Right cardiac atrium (tissue), 5 donors: ENCODE measurements at regions of chr2 and their contacts with region 1.

Region 1: DNA sequence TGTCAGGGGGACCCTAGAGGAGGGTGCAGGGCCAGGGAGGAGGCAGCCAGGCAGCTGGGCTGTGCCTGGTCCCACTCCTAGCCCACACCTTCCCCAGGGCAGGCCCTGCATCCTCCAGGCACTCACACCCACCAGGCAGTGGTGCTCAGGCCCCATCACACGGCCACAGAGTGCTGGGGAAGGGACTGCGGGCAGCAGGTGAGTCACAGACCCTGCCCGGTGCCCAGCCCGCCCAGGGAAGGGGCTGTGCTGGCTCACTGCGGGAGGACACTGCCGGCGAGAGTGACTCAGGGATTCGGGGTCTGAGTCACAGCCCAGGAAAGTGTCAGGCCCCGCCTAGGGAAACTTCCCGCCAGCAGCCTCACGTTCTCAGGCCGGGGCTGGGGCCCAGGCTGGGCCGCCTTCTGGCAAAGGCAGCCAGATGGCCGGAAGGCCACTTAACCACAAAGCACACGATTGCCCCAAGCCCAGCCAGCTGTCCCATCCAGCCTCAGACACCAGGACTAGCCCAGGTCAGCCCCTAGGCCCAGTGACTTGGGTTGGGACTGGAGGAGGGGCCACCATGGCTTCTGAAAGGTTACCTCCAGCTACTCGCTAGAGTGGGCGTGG is 42.2 kb downstream of the BIN1 start:
- DNase-seq: peak; percentile 95 to 96 (median 95)
- ATAC-seq: peak; percentile 92
- H3K4me3 ChIP-seq: no peak overlapping the region
- H3K27ac ChIP-seq: peak overlapping the region; percentile 7
- H3K4me1 ChIP-seq: peaks cover 3% of the 10 kb centered on the region
- H3K27me3 ChIP-seq: no peaks in the 10 kb centered on the region

Region 2: GRCh38 chr2:127174136-127174535 is 109.4 kb after region 1 on chr2:
- intact Hi-C with region 1: loop called in 1 of 4 experiments (anchors 10 kb)
- DNase-seq: peak in 1 of 3 donors; percentile 64
- ATAC-seq: no peak
- H3K4me3 ChIP-seq: no peak overlapping the region
- H3K27ac ChIP-seq: no peak overlapping the region
- H3K4me1 ChIP-seq: no peaks in the 10 kb centered on the region
- H3K27me3 ChIP-seq: no peaks in the 10 kb centered on the region